ENCODE measurements at regions of chr4 and their contacts with region 1.

Region 1: DNA sequence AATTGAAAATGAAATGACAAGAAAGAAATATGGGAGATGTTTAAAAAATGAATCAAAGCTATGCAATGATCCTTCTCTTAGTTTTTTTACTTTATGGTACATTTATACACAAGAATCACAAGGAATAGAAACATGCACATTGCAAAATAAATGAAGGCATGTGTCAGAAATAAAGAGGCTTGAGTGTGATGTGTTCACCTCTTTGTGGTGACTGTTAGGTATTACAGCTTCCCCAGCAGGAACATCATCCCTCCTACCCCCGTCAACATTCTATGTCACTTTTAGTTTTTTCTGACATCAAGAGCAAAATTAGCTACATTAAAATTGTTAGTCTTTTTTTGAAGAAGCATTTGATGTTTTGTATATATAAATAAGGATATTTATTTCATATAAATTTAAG is 214.8 kb downstream of the SLC4A4 start:
- DNase-seq: no peak
- ATAC-seq: peak; percentile 72 to 80

Region 2: GRCh38 chr4:71184195-71184781 is 369.3 kb before region 1 on chr4:
- intact Hi-C with region 1: loop called (anchors 2 to 5 kb)
- DNase-seq: peak; percentile 22
- ATAC-seq: no peak

Region 3: GRCh38 chr4:71229477-71230270 is 323.9 kb before region 1 on chr4:
- intact Hi-C with region 1: loop called in 1 of 2 experiments (anchors 5 kb)
- DNase-seq: no peak
- ATAC-seq: peak; percentile 35 to 45